ENCODE measurements at regions of chr7 and their contacts with region 1.

Region 1: GRCh38 chr7:6106140-6106904 is 75.1 kb downstream of the ANKRD61 start:
- DNase-seq: peak; percentile 56
- H3K4me3 ChIP-seq: peak overlapping the region; percentile 45 to 80 (median 76)
- H3K27ac ChIP-seq: peak overlapping the region; percentile 83 to 92 (median 88)
- H3K4me1 ChIP-seq: peaks cover 0 to 25% (median 20%) of the 10 kb centered on the region in 4 donors
- H3K27me3 ChIP-seq: no peaks in the 10 kb centered on the region
- CTCF ChIP-seq: peak in 1 of 4 experiments; percentile 32
- EP300 ChIP-seq: no peak
- POLR2A ChIP-seq: no peak

Region 2: DNA sequence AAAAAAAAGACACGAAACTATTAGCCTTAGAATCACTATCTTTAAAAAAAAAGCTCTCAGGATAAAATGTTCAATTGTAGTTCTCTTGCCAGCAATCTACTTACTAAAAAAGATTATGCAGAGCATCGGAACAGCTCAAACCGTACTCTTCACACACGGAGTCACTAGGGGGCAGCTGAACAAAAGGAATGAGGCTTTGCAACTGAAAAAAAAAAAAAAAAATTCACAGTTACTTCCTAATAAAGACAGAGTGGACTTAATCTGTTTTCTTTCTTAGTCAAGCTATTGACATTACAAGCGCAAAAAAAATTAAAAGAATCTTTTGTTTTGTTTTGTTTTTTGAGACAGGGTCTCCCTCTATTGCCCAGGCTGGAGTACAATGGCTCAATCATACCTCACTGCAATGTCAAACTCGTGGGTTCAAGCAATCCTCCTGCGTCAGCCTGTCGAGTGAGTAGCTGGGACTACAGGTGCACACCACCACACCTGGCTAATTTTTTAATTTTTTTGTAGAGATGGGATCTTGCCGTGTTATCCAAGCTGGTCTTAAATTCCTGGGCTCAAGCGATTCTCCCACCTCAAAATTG is 109.0 kb before region 1 on chr7:
- intact Hi-C with region 1: loop called (anchors 1 kb)
- DNase-seq: no peak
- H3K4me3 ChIP-seq: no peak overlapping the region
- H3K27ac ChIP-seq: peak overlapping the region in 2 of 4 donors; percentile 54 to 63
- H3K4me1 ChIP-seq: peaks cover 0 to 6% (median 2%) of the 10 kb centered on the region in 4 donors
- H3K27me3 ChIP-seq: no peaks in the 10 kb centered on the region
- CTCF ChIP-seq: peak; percentile 43 to 61 (median 60)
- EP300 ChIP-seq: no peak
- POLR2A ChIP-seq: no peak

Region 3: DNA sequence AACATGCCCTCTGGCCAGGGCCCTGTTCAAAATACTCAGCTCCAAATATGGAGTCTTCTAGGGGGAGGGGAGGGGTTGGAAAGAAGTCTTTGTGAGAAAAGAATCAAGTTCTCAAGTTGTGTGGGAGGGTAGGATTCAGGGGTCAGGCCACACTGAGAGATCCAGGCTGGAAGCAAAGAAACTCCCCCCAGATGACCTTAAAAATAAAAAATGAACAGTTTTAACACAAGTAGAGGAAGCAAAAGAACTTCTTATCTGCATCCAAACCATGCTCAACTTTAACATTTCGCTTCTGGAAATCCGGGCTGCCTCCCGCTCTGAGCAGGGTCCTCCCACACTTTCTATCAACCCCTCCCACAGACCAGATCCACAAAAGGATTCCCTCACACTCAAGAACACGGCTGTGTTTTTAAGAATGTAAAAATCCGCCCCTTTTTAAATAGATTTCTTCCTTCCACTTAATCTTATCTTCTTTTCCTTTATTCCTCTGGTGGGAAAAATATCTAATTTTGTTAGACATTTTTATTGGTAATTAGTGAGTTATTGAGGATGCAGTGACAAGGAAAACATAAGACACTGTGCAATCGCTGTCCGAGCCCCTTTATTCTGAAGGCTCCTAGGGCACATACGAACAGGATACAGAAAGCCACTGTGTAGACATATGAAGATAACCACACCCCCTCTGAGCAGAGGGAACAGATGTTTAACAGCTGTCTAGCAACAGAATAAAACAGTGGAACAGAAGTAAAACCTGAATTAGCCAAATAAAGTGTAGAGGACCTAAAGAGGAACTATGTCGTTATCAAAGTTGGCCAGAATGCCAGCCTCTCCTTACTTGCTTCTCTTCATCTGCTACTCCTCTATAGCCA is 122.3 kb after region 1 on chr7:
- intact Hi-C with region 1: no loop called
- DNase-seq: no peak
- H3K4me3 ChIP-seq: peak overlapping the region in 2 of 4 donors; percentile 1 to 16
- H3K27ac ChIP-seq: peak overlapping the region; percentile 64 to 76 (median 70)
- H3K4me1 ChIP-seq: peaks cover 0 to 48% (median 39%) of the 10 kb centered on the region in 4 donors
- H3K27me3 ChIP-seq: no peaks in the 10 kb centered on the region
- CTCF ChIP-seq: no peak
- EP300 ChIP-seq: no peak
- POLR2A ChIP-seq: no peak